Adrenal gland (tissue), 19 donors: ENCODE measurements at regions of chr5 and their contacts with region 1.

Region 1: GRCh38 chr5:16456103-16456832 is 9.3 kb downstream of the ZNF622 start:
- DNase-seq: peak; percentile 22 to 71 (median 65)
- H3K4me3 ChIP-seq: peak overlapping the region in 1 of 4 donors; percentile 20
- H3K27ac ChIP-seq: peak overlapping the region in 3 of 5 donors; percentile 10 to 81 (median 59)
- H3K4me1 ChIP-seq: peaks cover 4 to 33% of the 10 kb centered on the region in 2 donors
- H3K27me3 ChIP-seq: no peaks in the 10 kb centered on the region
- CTCF ChIP-seq: peak; percentile 59 to 79 (median 68)
- POLR2A ChIP-seq: no peak

Region 2: GRCh38 chr5:16156152-16156551 is 300.1 kb before region 1 on chr5:
- intact Hi-C with region 1: loop called in 1 of 2 experiments (anchors 5 kb)
- DNase-seq: no peak
- H3K4me3 ChIP-seq: no peak overlapping the region
- H3K27ac ChIP-seq: no peak overlapping the region
- H3K4me1 ChIP-seq: no peaks in the 10 kb centered on the region
- H3K27me3 ChIP-seq: no peaks in the 10 kb centered on the region
- CTCF ChIP-seq: no peak
- POLR2A ChIP-seq: no peak